ENCODE measurements at regions of chr1 and their contacts with region 1.

Region 1: DNA sequence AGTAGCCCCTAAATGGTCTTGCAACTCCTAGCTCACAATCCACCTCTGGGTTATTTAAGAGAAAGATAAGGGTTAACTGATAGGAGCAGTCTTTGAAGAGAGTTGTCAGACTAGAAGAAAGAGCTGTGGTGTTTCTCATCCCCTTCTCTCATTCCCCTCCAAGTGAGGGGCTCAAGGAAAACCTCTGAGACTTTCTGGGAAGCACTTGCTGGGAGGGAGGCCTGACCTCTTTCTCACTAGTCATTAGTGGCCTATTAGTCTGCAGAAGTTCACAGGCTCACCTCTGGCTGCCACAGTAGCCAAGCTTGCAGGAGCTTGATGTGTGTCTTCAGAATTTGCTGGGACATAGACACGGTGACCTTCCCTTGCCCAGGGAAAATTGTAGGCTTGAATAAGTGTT is 6.2 kb upstream of the GPR89A start:
- DNase-seq: no peak
- H3K4me3 Mint-ChIP-seq: no peak overlapping the region
- H3K27ac Mint-ChIP-seq: no peak overlapping the region
- H3K4me1 Mint-ChIP-seq: no peaks in the 10 kb centered on the region
- H3K27me3 Mint-ChIP-seq: peaks cover 14% of the 10 kb centered on the region

Region 2: GRCh38 chr1:145720877-145721671 is 119.5 kb after region 1 on chr1:
- intact Hi-C with region 1: loop called (anchors 5 kb)
- DNase-seq: peak; percentile 62
- H3K4me3 Mint-ChIP-seq: peak overlapping the region; percentile 72
- H3K27ac Mint-ChIP-seq: no peak overlapping the region
- H3K4me1 Mint-ChIP-seq: peaks cover 23% of the 10 kb centered on the region
- H3K27me3 Mint-ChIP-seq: peaks cover 25% of the 10 kb centered on the region

Region 3: DNA sequence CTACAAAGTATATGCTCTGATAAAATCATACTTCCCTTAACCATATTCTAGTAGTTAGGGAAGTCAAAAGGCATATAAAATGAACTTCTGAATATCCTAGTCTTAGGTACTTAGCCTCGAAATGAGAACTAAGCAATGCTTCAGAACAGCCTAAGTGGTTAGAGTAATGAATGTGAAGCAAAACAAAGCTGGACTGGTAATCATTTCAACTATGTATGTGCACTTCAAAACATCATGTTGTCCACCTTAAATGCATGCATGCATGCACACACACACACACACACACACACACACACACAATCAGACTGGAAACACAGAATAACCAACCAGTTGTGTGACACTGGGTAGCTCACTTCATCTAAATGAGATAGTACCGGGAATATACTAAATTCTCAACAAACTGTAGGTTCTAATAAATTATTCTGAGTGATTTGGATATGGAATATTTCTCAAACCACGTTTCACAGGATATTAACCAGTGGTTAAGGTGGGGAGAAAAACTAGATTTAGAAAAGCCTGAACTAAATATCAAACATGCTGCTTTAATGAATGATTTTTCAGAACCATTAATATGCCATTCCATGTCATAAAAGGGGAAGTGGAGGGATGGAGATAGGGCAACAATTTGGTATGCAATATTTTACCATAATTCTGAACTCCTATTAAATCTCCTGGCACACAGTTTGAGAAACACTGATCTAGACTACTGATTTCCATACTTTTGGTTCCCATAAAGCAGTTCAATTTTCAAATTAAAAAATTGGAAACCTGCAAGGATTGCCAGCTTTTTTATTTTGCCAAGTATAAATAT is 202.8 kb after region 1 on chr1:
- intact Hi-C with region 1: no loop called
- DNase-seq: no peak
- H3K4me3 Mint-ChIP-seq: no peak overlapping the region
- H3K27ac Mint-ChIP-seq: no peak overlapping the region
- H3K4me1 Mint-ChIP-seq: peaks cover 26% of the 10 kb centered on the region
- H3K27me3 Mint-ChIP-seq: no peaks in the 10 kb centered on the region

Region 4: GRCh38 chr1:145963995-145964901 is 362.7 kb after region 1 on chr1 and contains the starts of genes ANKRD34A and POLR3GL:
- intact Hi-C with region 1: no loop called
- DNase-seq: peak; percentile 89
- H3K4me3 Mint-ChIP-seq: peak within 1 kb of the TSS; percentile 93
- H3K27ac Mint-ChIP-seq: peak within 1 kb of the TSS; percentile 87
- H3K4me1 Mint-ChIP-seq: peaks cover 48% of the 10 kb centered on the region
- H3K27me3 Mint-ChIP-seq: no peaks in the 10 kb centered on the region
- total RNA-seq, gene ANKRD34A: 4.8 and 5.1 TPM in 2 replicates
- total RNA-seq, gene POLR3GL: 10.6 and 11.6 TPM in 2 replicates